ENCODE measurements at regions of chr6 and their contacts with region 1.

Region 1: GRCh38 chr6:11496152-11497060 is 41.1 kb upstream of the TMEM170B start:
- DNase-seq: no peak
- ATAC-seq: peak; percentile 79
- H3K4me3 Mint-ChIP-seq: no peak overlapping the region
- H3K27ac Mint-ChIP-seq: peak overlapping the region; percentile 69
- H3K4me1 Mint-ChIP-seq: peaks cover 5% of the 10 kb centered on the region
- H3K27me3 Mint-ChIP-seq: no peaks in the 10 kb centered on the region
- CTCF ChIP-seq: peak; percentile 89

Region 2: DNA sequence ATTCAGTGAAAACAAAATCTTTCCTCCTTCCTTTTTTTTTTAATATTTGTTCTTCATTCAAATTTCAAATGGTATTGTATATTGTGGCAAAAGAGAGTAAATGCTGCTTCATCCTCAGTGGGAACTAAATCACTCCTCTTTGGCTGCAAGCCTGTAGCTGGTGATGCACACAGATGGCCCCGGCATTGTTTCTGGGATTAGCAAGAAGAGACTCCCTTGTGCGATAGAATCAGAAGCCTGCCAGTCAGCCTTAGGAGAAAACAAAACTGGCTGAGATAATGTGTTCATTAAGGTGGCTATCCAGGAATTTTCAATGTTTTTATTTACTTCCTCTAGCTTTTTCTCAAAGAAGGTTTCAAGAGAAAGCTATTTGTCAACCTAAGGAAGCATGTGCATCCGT is 431.6 kb before region 1 on chr6:
- CTCF ChIA-PET with region 1: interaction called, 3 read pairs
- POLR2A ChIA-PET with region 1: no interaction called
- intact Hi-C with region 1: loop called (anchors 1 kb)
- DNase-seq: no peak
- ATAC-seq: no peak
- H3K4me3 Mint-ChIP-seq: no peak overlapping the region
- H3K27ac Mint-ChIP-seq: no peak overlapping the region
- H3K4me1 Mint-ChIP-seq: no peaks in the 10 kb centered on the region
- H3K27me3 Mint-ChIP-seq: no peaks in the 10 kb centered on the region
- CTCF ChIP-seq: no peak

Region 3: DNA sequence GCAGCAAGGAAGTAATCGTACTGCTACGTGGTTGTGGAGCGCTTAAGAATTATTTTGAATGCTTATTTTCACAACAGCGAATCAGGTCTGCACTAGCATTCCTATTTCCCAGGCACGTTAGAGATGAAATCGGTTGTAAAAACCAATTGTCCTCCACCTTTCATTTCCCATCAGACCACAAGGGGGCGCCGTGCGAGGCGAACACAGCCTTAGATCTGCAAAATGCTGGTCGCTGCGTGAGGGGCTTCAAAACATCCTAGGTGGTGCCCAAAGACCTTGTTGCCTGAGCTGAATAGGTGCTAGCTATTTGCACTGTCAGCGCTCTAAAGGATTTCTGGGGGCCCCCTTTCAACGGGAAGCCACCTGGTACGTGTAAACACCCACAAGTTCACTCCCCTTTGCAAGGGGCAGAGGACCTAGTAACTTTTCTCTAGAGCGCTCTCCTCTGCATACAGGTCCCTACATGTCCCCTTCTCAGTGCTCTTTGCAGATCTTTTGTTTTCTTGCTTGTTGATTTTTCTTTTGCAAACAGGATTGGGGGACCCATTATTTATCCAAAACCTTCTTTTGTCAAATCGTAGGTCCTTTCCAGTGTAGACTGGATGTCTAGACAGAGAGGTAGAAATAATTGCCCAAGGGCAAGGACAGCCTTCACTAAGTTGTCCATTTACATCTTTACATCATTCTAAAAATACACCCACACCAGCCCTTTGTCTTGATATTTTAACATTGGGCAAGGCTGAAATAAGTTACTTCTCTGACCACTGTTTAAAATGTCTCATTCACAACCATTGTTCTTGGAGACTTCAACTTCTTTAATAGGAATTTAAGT is 323.7 kb before region 1 on chr6:
- CTCF ChIA-PET with region 1: interaction called, 157 read pairs
- POLR2A ChIA-PET with region 1: interaction called, 5 read pairs
- intact Hi-C with region 1: loop called (anchors 1 kb)
- DNase-seq: peak; percentile 68
- ATAC-seq: peak; percentile 77
- H3K4me3 Mint-ChIP-seq: peak overlapping the region; percentile 42
- H3K27ac Mint-ChIP-seq: no peak overlapping the region
- H3K4me1 Mint-ChIP-seq: peaks cover 9% of the 10 kb centered on the region
- H3K27me3 Mint-ChIP-seq: no peaks in the 10 kb centered on the region
- CTCF ChIP-seq: peak; percentile 89

Region 4: DNA sequence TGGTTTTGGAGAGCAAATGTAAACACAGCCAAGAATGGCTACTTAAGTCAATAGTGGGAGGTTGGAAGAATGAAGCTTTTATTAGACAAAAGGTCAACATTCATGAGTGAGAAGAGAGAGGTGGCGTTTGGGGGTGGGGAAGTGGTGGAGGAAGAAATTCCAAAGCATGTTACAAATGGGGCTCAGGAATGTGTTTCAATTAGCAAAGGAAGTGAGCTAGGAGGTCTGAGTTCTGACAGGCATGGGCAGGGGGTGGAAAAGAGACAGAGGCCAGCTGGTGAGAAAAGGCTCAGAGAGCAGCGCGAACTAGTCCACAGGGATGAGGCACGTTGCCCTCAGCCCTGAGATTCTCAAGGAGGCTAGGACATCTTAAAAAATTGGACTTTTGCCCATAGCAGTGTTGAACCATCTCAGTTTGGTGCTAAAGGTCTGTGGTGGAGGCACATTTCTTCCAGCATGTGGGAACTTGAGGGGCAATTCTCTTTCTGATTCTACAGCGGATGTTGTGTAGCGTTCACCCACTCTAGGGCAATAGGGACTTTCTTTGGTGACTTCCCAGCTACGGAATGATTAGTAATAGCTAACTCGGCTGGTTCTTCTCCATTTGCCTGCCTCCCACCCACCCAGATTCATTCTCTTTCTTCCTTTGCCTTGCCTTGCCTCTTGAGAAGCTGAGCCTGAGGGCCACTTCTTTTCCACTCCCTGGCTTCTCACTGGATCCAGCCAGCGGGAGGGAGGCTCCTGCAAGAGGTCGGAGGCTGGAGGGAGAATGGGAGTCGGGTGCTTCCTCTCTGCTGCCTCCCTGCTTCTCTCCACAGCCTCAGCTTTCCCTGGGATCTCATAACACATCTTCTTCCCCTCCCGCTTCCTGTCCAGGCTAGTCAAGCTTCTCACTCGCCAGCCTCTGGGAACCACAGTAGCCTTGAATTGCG is 218.9 kb before region 1 on chr6:
- CTCF ChIA-PET with region 1: interaction called, 15 read pairs
- POLR2A ChIA-PET with region 1: no interaction called
- intact Hi-C with region 1: loop called (anchors 2 kb)
- DNase-seq: no peak
- ATAC-seq: peak; percentile 69
- H3K4me3 Mint-ChIP-seq: peak overlapping the region; percentile 59
- H3K27ac Mint-ChIP-seq: peak overlapping the region; percentile 91
- H3K4me1 Mint-ChIP-seq: peaks cover 48% of the 10 kb centered on the region
- H3K27me3 Mint-ChIP-seq: no peaks in the 10 kb centered on the region
- CTCF ChIP-seq: no peak

Region 5: DNA sequence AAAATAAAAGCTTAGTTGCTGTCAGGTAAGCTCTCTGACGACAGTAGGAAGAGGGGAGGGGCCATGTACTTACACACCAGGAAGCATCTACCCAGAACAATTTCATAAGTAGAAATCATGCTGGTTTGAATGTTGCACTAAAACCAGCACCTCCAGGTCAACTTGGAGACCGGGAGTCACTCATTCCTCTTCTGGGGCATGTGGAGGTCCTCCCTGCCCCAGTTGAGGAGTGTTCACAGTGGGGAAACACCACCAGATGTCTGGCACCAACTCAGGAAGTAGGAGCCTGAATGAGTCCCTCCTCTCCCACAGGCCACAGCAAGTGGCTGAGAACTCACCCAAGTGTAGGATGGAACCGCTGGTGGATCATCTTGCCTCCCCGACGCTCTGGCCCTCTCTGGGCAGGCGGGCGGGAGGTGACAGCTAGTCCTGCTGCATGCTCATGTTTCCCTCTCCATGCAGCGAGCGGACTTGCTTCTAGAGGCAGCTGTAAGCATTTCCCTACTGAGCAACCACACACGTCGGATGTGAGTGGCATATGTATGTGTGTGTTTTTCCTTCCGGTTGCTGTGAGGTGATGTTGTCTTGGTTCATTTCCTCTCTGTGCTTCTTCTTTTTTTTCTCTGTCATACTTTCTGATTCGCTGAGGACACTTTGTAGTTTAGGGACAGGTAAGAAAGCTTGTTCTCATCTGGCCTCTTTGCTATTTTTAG is 114.4 kb before region 1 on chr6:
- CTCF ChIA-PET with region 1: interaction called, 27 read pairs
- POLR2A ChIA-PET with region 1: interaction called, 7 read pairs
- intact Hi-C with region 1: loop called (anchors 1 kb)
- DNase-seq: peak; percentile 58
- ATAC-seq: peak; percentile 89
- H3K4me3 Mint-ChIP-seq: peak overlapping the region; percentile 91
- H3K27ac Mint-ChIP-seq: peak overlapping the region; percentile 93
- H3K4me1 Mint-ChIP-seq: peaks cover 84% of the 10 kb centered on the region
- H3K27me3 Mint-ChIP-seq: no peaks in the 10 kb centered on the region
- CTCF ChIP-seq: no peak

Region 6: DNA sequence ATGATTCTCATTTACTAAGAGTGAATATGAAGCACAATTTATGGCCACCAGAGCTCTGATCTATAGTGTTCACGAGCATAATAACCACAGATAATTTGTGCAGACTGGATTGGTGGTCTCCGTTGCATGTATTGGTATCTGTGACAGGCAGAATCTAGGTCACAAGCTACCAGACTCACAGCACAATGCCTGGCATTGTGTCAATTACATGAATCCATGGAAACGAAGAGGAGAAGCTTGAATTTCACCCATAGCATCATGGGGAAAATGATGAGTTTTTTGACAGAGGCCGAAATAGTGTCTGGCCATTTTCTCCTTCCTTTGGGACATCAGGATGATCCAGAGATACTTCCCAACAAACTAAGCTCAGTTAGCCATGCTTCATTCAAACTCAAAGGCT is 11.1 kb before region 1 on chr6:
- CTCF ChIA-PET with region 1: interaction called, 13 read pairs
- POLR2A ChIA-PET with region 1: no interaction called
- intact Hi-C with region 1: no loop called
- DNase-seq: no peak
- ATAC-seq: no peak
- H3K4me3 Mint-ChIP-seq: no peak overlapping the region
- H3K27ac Mint-ChIP-seq: no peak overlapping the region
- H3K4me1 Mint-ChIP-seq: no peaks in the 10 kb centered on the region
- H3K27me3 Mint-ChIP-seq: no peaks in the 10 kb centered on the region
- CTCF ChIP-seq: no peak